GM12878 (cell line): ENCODE measurements at regions of chr2 and their contacts with region 1.

Region 1: DNA sequence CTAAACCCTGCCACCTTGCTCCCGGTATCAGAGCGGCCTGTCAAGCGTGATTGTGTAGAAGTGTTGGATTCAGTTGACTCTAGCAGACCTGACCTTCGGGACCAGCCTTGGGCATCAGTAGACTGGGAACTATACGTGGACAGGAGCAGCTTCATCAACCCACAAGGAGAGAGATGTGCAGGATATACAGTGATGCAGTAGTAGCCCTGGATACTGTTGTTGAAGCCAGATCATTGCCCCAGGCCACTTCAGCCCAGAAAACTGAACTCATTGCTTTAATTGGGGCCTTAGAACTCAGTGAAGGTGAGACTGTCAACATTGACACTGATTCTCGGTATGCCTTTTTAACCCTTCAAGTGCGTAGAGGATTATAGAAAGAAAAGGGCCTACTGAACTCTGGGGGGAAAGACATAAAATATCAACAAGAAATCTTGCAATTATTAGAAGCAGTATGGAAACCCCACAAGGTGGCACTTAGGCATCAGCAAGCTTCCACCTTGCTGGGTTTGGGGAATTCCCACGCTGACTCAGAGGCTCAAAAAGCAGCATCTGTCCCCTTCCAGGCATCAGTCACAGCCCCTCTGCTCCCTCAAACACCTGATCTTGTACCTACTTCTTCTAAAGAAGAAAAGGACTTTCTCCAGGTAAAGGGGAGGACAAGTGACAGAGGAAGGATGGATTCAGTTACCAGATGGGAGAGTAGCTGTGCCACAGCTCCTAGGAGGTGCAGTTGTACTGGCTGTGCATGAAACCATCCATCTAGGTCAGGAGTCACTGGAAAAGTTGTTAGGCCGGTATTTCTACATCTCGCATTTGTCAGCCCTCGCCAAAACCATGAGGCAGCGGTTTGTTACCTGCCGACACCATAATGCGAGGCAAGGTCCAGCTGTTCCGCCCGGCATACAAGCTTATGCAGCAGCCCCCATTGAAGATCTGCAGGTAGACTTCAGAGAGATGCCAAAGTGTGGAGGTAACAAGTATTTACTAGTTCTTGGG is 18.8 kb upstream of the NAGK start:
- DNase-seq: no peak
- ATAC-seq: peak; percentile 90
- H3K4me3 ChIP-seq: no peak overlapping the region
- H3K27ac ChIP-seq: no peak overlapping the region
- H3K4me1 ChIP-seq: peaks cover 4% of the 10 kb centered on the region; the same call in 1 of the 2 replicates
- H3K27me3 ChIP-seq: no peaks in the 10 kb centered on the region
- CTCF ChIP-seq: peak; percentile 32 to 55 (median 35); a peak in 5 of 6 replicates
- EP300 ChIP-seq: no peak
- POLR2A ChIP-seq: no peak
- RAD21 ChIP-seq: peak; percentile 73

Region 2: GRCh38 chr2:71130113-71130904 is 80.6 kb after region 1 on chr2 and contains the starts of genes MCEE and MPHOSPH10:
- CTCF ChIA-PET with region 1: interaction called, 7 read pairs
- POLR2A ChIA-PET with region 1: no interaction called
- RAD21 ChIA-PET with region 1: interaction called, 13 read pairs
- SMC1A ChIA-PET with region 1: interaction called, 10 read pairs
- in situ Hi-C with region 1: no loop called
- intact Hi-C with region 1: no loop called
- DNase-seq: peak; percentile 64
- ATAC-seq: peak; percentile 97
- H3K4me3 ChIP-seq: peak within 1 kb of the TSS; percentile 93
- H3K27ac ChIP-seq: peak within 1 kb of the TSS; percentile 86
- H3K4me1 ChIP-seq: peaks cover 5% of the 10 kb centered on the region; the same call in 1 of the 2 replicates
- H3K27me3 ChIP-seq: no peaks in the 10 kb centered on the region
- CTCF ChIP-seq: no peak
- EP300 ChIP-seq: no peak
- POLR2A ChIP-seq: peak; percentile 90
- RAD21 ChIP-seq: no peak
- polyA plus RNA-seq, gene MCEE: 43.6 to 63.4 TPM
- polyA plus RNA-seq, gene MPHOSPH10: 29.1 to 40.4 TPM